GM12878 (cell line): ENCODE measurements at regions of chr5 and their contacts with region 1.

Region 1: DNA sequence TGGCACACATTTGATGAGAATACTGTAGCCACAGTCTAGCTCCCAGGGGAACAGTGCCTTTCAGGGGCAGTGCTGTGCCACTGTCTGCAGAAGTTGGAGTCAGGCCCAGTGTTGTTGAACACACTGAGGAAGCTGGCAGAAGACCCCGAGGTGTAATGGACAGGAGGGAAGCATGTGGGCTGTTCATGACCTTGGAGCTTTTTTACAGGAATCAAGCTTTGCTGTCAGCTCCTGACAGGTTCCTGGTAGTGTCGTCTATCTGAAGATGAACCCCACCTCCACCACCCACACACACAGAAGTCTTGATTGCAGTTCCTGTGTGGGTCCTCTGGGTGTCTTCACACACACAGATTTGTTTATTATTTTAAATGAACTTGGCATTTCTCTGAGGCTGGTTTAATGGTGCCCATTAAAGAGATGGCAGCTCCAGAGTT is 40.3 kb upstream of the TNFAIP8 start:
- DNase-seq: peak; percentile 69
- ATAC-seq: peak; percentile 89
- H3K4me3 ChIP-seq: no peak overlapping the region
- H3K27ac ChIP-seq: peak overlapping the region; percentile 68
- H3K4me1 ChIP-seq: peaks cover 64% of the 10 kb centered on the region
- H3K27me3 ChIP-seq: no peaks in the 10 kb centered on the region
- CTCF ChIP-seq: peak; percentile 61 to 73 (median 63); a peak in 5 of 6 replicates
- EP300 ChIP-seq: no peak
- POLR2A ChIP-seq: no peak
- RAD21 ChIP-seq: peak; percentile 87

Region 2: DNA sequence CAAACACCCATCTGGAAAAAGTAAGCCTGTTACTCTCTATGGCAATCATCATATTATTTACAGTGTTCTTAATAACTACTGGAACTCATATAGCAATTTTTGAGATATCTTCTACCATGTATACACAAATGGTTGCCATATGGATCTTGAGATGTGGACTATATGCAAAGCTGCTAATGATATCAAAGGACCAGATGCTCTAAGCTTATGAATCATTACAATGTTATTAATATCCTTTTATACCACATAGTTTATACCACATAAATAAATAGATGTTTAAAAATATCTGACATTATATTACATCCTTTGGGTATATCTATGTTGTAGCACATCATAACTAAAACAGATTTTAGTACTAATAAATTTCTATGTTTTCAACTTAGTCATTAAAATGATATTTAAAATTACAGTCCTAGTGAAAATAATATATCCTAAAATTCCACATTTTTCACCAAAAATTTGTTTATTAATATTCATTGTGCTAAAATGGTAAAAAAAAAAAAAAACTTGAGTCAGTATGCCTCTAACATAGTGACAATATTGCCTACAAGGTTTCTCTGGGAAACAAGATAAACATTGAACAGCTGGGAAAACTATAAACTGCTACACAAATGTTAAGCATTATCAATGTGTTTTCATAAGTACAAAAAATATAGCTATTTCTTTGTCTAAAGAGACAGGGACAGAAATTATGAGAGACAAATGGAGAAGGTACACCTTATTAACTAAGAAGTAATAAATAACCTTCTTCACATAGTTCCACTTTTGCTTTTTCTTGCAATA is 412.7 kb before region 1 on chr5:
- CTCF ChIA-PET with region 1: no interaction called
- POLR2A ChIA-PET with region 1: no interaction called
- RAD21 ChIA-PET with region 1: no interaction called
- SMC1A ChIA-PET with region 1: no interaction called
- in situ Hi-C with region 1: no loop called
- intact Hi-C with region 1: no loop called
- DNase-seq: no peak
- ATAC-seq: no peak
- H3K4me3 ChIP-seq: no peak overlapping the region
- H3K27ac ChIP-seq: no peak overlapping the region
- H3K4me1 ChIP-seq: no peaks in the 10 kb centered on the region
- H3K27me3 ChIP-seq: no peaks in the 10 kb centered on the region
- CTCF ChIP-seq: no peak
- EP300 ChIP-seq: no peak
- POLR2A ChIP-seq: no peak
- RAD21 ChIP-seq: no peak

Region 3: GRCh38 chr5:119070828-119071572 is 244.5 kb before region 1 on chr5 and contains the start of gene DMXL1:
- CTCF ChIA-PET with region 1: interaction called, 11 read pairs
- POLR2A ChIA-PET with region 1: interaction called, 4 read pairs
- RAD21 ChIA-PET with region 1: interaction called, 7 read pairs
- SMC1A ChIA-PET with region 1: interaction called, 10 read pairs
- in situ Hi-C with region 1: no loop called
- intact Hi-C with region 1: no loop called
- DNase-seq: peak; percentile 99
- ATAC-seq: peak; percentile 84
- H3K4me3 ChIP-seq: peak within 1 kb of the TSS; percentile 79
- H3K27ac ChIP-seq: peak within 1 kb of the TSS; percentile 91
- H3K4me1 ChIP-seq: peaks cover 5% of the 10 kb centered on the region
- H3K27me3 ChIP-seq: no peaks in the 10 kb centered on the region
- CTCF ChIP-seq: no peak
- EP300 ChIP-seq: 0 out of 4 replicates have a peak, but pooled peaks of 1 of the 2 experiments have one; percentile 8
- POLR2A ChIP-seq: peak; percentile 91
- RAD21 ChIP-seq: no peak
- polyA plus RNA-seq, gene DMXL1: 9.1 to 11.0 TPM

Region 4: DNA sequence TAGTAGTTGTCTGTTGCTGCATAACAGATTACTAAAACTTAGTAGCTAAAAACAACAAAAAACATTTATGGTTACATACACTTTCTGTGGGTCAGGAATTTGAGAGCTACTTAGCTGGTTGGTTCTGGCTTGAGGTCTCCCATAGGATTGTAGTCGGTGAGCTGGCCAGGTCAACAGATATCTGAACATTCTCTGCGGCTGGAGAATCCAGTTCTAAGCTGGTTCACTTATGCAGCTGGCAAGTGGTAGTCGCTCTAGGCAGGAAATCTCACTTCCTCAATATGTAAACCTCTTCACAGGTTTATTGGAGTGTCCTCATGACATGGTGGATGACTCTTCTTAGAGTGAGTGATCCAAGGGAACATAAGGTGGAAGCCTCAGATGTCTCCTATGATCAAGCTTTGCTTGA is 25.4 kb before region 1 on chr5:
- CTCF ChIA-PET with region 1: interaction called, 24 read pairs
- POLR2A ChIA-PET with region 1: interaction called, 13 read pairs
- RAD21 ChIA-PET with region 1: interaction called, 63 read pairs
- SMC1A ChIA-PET with region 1: interaction called, 69 read pairs
- in situ Hi-C with region 1: no loop called
- intact Hi-C with region 1: no loop called
- DNase-seq: peak; percentile 66
- ATAC-seq: peak; percentile 90
- H3K4me3 ChIP-seq: peak overlapping the region; percentile 38
- H3K27ac ChIP-seq: peak overlapping the region; percentile 84
- H3K4me1 ChIP-seq: peaks cover 46% of the 10 kb centered on the region
- H3K27me3 ChIP-seq: no peaks in the 10 kb centered on the region
- CTCF ChIP-seq: no peak
- EP300 ChIP-seq: peak; percentile 69 to 79; a peak in 2 of 4 replicates
- POLR2A ChIP-seq: no peak
- RAD21 ChIP-seq: no peak

Region 5: GRCh38 chr5:119340597-119341218 is 25.2 kb after region 1 on chr5:
- CTCF ChIA-PET with region 1: interaction called, 100 read pairs
- POLR2A ChIA-PET with region 1: interaction called, 17 read pairs
- RAD21 ChIA-PET with region 1: interaction called, 113 read pairs
- SMC1A ChIA-PET with region 1: interaction called, 318 read pairs
- in situ Hi-C with region 1: no loop called
- intact Hi-C with region 1: loop called (anchors 2 kb)
- DNase-seq: peak; percentile 91
- ATAC-seq: peak; percentile 73
- H3K4me3 ChIP-seq: peak overlapping the region; percentile 78
- H3K27ac ChIP-seq: peak overlapping the region; percentile 100
- H3K4me1 ChIP-seq: peaks cover 69% of the 10 kb centered on the region
- H3K27me3 ChIP-seq: no peaks in the 10 kb centered on the region
- CTCF ChIP-seq: 0 out of 6 replicates have a peak, but pooled peaks of 1 of the 3 experiments have one; percentile 20
- EP300 ChIP-seq: peak; percentile 55 to 86; a peak in 3 of 4 replicates
- POLR2A ChIP-seq: peak; percentile 50; the same call in 1 of the 2 replicates
- RAD21 ChIP-seq: peak; percentile 30; the same call in 1 of the 2 replicates

Region 6: DNA sequence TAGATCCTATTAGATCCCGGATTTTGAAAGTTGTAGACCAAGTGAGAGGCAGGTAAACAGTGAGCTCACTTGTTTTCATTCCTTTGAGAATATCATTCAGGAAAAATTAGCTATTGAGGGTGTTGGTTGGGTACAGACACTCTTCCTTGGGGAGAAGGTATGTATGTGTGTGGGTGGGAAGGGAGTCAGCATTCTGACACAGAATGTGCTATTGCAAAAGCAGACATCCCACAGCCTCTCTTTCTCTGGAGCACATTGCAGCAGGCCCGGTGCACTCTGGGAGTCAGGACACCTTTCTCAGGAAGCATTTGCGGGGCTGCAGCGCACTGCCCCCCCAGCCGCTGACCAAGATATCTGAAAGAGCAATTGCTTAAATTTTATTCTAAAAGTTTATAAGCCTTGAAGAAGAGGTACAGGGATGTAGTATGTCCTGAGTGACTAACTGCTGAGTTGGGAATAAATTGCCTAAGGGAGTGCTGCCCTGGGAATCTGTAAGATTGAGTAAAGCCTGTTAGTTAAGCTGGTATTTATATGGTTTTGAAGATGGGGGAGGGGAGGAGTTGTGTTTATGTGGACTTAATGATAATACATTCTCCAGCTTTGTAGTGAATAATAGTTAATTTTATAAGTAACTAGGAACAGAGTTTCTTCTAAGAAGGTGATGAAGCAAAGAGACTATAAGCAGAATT is 45.5 kb after region 1 on chr5:
- CTCF ChIA-PET with region 1: interaction called, 38 read pairs
- POLR2A ChIA-PET with region 1: interaction called, 3 read pairs
- RAD21 ChIA-PET with region 1: interaction called, 56 read pairs
- SMC1A ChIA-PET with region 1: interaction called, 60 read pairs
- in situ Hi-C with region 1: no loop called
- intact Hi-C with region 1: no loop called
- DNase-seq: no peak
- ATAC-seq: no peak
- H3K4me3 ChIP-seq: peak overlapping the region; percentile 96
- H3K27ac ChIP-seq: peak overlapping the region; percentile 3; the same call in 1 of the 2 replicates
- H3K4me1 ChIP-seq: peaks cover 50% of the 10 kb centered on the region
- H3K27me3 ChIP-seq: no peaks in the 10 kb centered on the region
- CTCF ChIP-seq: no peak
- EP300 ChIP-seq: no peak
- POLR2A ChIP-seq: no peak
- RAD21 ChIP-seq: no peak

Region 7: GRCh38 chr5:119397518-119398380 is 82.2 kb after region 1 on chr5:
- CTCF ChIA-PET with region 1: interaction called, 25 read pairs
- POLR2A ChIA-PET with region 1: interaction called, 3 read pairs
- RAD21 ChIA-PET with region 1: interaction called, 12 read pairs
- SMC1A ChIA-PET with region 1: interaction called, 393 read pairs
- in situ Hi-C with region 1: loop called (anchors 5 kb)
- intact Hi-C with region 1: no loop called
- DNase-seq: peak; percentile 81
- ATAC-seq: peak; percentile 73
- H3K4me3 ChIP-seq: 0 out of 2 replicates have a peak overlapping the region, but pooled peaks have one; percentile 1
- H3K27ac ChIP-seq: peak overlapping the region; percentile 83
- H3K4me1 ChIP-seq: peaks cover 65% of the 10 kb centered on the region
- H3K27me3 ChIP-seq: no peaks in the 10 kb centered on the region
- CTCF ChIP-seq: no peak
- EP300 ChIP-seq: peak; percentile 93 to 94
- POLR2A ChIP-seq: no peak
- RAD21 ChIP-seq: no peak